A673 (cell line): ENCODE measurements at regions of chr3 and their contacts with region 1.

Region 1: DNA sequence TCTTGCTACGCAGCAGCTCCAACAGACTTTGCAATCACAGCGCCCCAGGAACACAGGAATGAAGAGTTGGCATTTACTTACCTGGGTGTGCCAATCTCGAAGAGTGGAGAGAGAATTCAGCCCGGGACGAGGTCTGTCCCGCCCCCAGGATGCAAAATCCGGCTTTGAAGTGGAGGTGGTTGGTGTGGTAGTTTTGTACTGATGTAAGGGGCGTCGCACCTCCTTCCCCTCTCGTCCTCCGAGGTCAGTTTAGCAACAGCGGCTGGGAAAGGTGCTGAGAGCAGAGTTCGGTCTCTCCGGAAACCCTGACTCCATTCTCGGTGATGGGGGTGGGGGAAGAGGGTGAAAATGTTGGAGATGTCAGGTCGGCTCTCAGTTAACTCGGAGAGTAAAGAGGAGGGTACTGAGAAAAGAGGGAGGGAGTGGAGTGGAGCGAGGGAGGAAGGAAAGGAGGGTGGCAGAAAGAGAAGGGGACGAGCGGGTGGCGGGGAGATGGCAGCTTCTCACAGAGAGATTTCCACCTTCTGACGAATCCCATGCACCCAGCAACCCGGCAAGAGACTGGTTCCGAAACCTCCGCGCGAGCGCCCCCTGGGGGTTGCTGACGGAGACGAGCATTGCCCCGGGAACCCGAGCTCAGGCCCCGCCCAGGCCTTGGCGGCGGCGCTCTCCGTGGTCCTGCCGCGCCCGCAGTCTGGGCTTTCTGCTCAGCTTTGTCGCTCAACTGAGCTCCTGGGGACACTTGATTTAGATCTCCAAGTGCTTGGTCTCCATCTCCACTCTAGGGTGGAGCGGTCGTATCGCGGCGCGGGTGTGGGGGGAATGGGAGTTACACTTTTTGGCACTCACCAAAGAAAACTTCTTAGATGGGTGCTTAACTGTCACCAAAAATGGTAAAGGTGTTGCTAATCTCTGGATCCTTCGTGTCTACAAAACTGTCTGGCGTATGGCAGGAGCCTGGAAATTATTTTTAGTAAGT is at the start of gene CPNE4:
- DNase-seq: peak; percentile 94
- H3K4me3 ChIP-seq: peak within 1 kb of the TSS; percentile 55
- H3K27ac ChIP-seq: no peak within 1 kb of the TSS
- H3K4me1 ChIP-seq: peaks cover 5% of the 10 kb centered on the region
- H3K27me3 ChIP-seq: peaks cover 4% of the 10 kb centered on the region
- CTCF ChIP-seq: peak; percentile 95
- total RNA-seq, gene CPNE4: 2.9 and 5.7 TPM in 2 replicates

Region 2: DNA sequence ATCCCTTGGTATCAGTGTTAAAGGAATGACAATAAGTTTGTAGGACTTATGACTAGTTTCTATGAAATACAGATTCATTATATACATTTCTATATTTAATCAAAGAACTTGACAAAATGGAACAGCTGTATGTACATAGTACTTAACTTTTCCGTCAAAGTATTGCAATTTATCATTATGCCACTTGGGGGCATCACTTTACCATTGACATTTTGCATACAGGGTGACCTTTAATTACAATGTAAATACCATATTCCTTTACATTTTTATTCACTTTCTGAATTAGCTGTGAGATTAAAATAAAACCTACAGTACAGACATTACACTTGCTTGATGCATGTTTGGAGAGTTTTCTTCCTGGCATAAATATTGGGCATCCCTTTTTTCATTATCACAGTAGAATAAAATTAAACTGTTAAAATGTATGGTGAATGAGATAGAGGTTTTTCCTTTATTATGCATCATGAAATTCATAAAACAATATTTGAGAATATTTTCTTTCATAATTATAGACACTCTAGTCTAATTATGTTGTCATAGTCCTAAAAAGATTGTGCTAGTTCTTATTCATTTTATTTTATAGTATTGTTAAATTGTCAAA is 1001.2 kb before region 1 on chr3:
- CTCF ChIA-PET with region 1: interaction called, 5 read pairs
- POLR2A ChIA-PET with region 1: no interaction called
- intact Hi-C with region 1: loop called (anchors 5 kb)
- DNase-seq: peak; percentile 76
- H3K4me3 ChIP-seq: no peak overlapping the region
- H3K27ac ChIP-seq: no peak overlapping the region
- H3K4me1 ChIP-seq: peaks cover 15% of the 10 kb centered on the region
- H3K27me3 ChIP-seq: no peaks in the 10 kb centered on the region
- CTCF ChIP-seq: peak; percentile 83

Region 3: GRCh38 chr3:131582438-131582837 is 452.3 kb before region 1 on chr3:
- CTCF ChIA-PET with region 1: no interaction called
- POLR2A ChIA-PET with region 1: no interaction called
- intact Hi-C with region 1: no loop called
- DNase-seq: no peak
- H3K4me3 ChIP-seq: no peak overlapping the region
- H3K27ac ChIP-seq: no peak overlapping the region
- H3K4me1 ChIP-seq: no peaks in the 10 kb centered on the region
- H3K27me3 ChIP-seq: no peaks in the 10 kb centered on the region
- CTCF ChIP-seq: no peak

Region 4: GRCh38 chr3:131750256-131750655 is 284.5 kb before region 1 on chr3:
- CTCF ChIA-PET with region 1: no interaction called
- POLR2A ChIA-PET with region 1: no interaction called
- intact Hi-C with region 1: no loop called
- DNase-seq: no peak
- H3K4me3 ChIP-seq: no peak overlapping the region
- H3K27ac ChIP-seq: no peak overlapping the region
- H3K4me1 ChIP-seq: no peaks in the 10 kb centered on the region
- H3K27me3 ChIP-seq: peaks cover 48% of the 10 kb centered on the region
- CTCF ChIP-seq: no peak

Region 5: DNA sequence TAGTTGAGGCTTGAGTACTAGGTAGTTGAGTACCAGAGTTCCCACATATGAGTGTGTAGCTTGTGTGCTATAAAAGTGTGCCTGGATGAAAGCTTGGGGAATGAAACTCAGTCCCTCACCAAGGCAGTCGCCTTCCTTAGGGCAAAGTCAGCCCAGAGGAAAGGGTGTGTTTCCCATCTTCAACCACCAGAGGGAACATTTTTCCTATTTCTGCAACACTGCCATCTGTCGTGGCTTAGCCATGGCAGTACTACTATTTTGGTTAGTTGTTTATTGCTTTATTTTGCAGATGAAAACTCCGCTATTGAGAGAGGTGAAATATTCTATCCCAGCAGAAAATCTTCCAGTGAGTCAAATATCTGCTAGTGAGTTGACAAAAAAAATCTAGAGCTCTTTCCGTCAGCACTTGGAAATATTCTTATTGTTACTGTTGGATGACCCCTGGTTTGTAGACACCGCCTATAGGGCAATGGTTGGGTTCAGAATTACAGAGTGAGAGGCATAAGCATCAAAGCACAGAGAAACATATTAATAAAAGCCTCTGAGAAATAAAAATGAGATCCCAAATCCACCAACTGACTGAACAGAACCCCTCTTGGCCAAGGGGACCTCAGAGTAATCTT is 239.9 kb before region 1 on chr3:
- CTCF ChIA-PET with region 1: interaction called, 21 read pairs
- POLR2A ChIA-PET with region 1: interaction called, 3 read pairs
- intact Hi-C with region 1: loop called (anchors 1 kb)
- DNase-seq: peak; percentile 83
- H3K4me3 ChIP-seq: no peak overlapping the region
- H3K27ac ChIP-seq: peak overlapping the region; percentile 77
- H3K4me1 ChIP-seq: peaks cover 48% of the 10 kb centered on the region
- H3K27me3 ChIP-seq: no peaks in the 10 kb centered on the region
- CTCF ChIP-seq: peak; percentile 88

Region 6: GRCh38 chr3:132210476-132211346 is 175.9 kb after region 1 on chr3:
- CTCF ChIA-PET with region 1: interaction called, 13 read pairs
- POLR2A ChIA-PET with region 1: interaction called, 3 read pairs
- intact Hi-C with region 1: no loop called
- DNase-seq: peak; percentile 38
- H3K4me3 ChIP-seq: no peak overlapping the region
- H3K27ac ChIP-seq: no peak overlapping the region
- H3K4me1 ChIP-seq: peaks cover 5% of the 10 kb centered on the region
- H3K27me3 ChIP-seq: no peaks in the 10 kb centered on the region
- CTCF ChIP-seq: peak; percentile 73

Region 7: DNA sequence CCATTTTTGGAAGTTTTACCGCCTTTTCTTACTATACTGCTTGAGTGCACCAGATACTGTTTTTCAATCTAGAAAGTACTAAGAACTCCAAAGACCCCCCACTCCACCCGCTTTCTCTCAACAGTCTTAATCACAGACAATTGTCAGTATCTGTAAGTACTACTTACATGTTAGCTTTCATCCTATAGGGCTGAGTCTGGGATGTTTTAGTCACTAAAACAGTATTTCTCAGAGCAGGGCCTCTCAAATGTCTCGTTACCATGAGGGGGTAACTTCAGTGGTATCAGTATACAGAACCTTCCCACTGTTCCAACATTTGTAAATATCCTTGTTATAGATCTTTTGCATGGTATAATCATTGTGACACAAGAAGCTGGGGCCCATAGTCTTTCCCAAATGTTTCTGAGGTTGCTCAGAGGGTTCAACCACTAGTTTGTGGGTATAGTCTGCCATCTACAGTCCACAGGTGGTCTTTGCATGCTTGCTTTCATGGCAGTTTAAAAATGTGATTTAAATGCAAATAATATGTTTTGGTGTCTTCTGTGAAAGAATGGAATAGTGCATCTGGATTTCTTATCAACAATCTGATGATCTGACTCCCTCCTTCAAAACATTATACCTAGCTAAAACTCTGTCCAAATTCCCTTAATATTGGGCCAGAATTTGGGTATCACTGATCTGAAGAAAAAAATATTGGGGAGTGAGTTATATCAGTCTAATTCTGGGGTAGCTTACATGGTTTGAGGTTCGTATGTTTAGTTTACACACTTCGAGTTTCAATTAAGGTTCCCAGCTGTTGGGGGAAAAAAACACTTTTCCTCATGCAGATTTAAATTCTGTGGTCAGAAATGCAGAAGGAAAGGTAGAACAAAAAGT is 364.5 kb after region 1 on chr3:
- CTCF ChIA-PET with region 1: no interaction called
- POLR2A ChIA-PET with region 1: no interaction called
- intact Hi-C with region 1: loop called (anchors 5 kb)
- DNase-seq: peak; percentile 71
- H3K4me3 ChIP-seq: no peak overlapping the region
- H3K27ac ChIP-seq: no peak overlapping the region
- H3K4me1 ChIP-seq: peaks cover 4% of the 10 kb centered on the region
- H3K27me3 ChIP-seq: no peaks in the 10 kb centered on the region
- CTCF ChIP-seq: peak; percentile 88